ENCODE measurements at regions of chr19 and their contacts with region 1.

Region 1: GRCh38 chr19:4267101-4267900 is 11.8 kb upstream of the SHD start:
- DNase-seq: peak; percentile 83
- ATAC-seq: peak; percentile 81
- H3K4me3 Mint-ChIP-seq: no peak overlapping the region
- H3K27ac Mint-ChIP-seq: peak overlapping the region; percentile 9
- H3K4me1 Mint-ChIP-seq: peaks cover 14% of the 10 kb centered on the region
- H3K27me3 Mint-ChIP-seq: no peaks in the 10 kb centered on the region

Region 2: GRCh38 chr19:4206818-4207484 is 60.4 kb before region 1 on chr19:
- CTCF ChIA-PET with region 1: no interaction called
- POLR2A ChIA-PET with region 1: no interaction called
- intact Hi-C with region 1: no loop called
- DNase-seq: no peak
- ATAC-seq: no peak
- H3K4me3 Mint-ChIP-seq: no peak overlapping the region
- H3K27ac Mint-ChIP-seq: no peak overlapping the region
- H3K4me1 Mint-ChIP-seq: no peaks in the 10 kb centered on the region
- H3K27me3 Mint-ChIP-seq: peaks cover 5% of the 10 kb centered on the region

Region 3: GRCh38 chr19:4217429-4218264 is 49.7 kb before region 1 on chr19:
- CTCF ChIA-PET with region 1: no interaction called
- POLR2A ChIA-PET with region 1: no interaction called
- intact Hi-C with region 1: no loop called
- DNase-seq: no peak
- ATAC-seq: no peak
- H3K4me3 Mint-ChIP-seq: no peak overlapping the region
- H3K27ac Mint-ChIP-seq: no peak overlapping the region
- H3K4me1 Mint-ChIP-seq: peaks cover 2% of the 10 kb centered on the region
- H3K27me3 Mint-ChIP-seq: no peaks in the 10 kb centered on the region

Region 4: GRCh38 chr19:4256563-4256962 is 10.7 kb before region 1 on chr19:
- CTCF ChIA-PET with region 1: interaction called, 11 read pairs
- POLR2A ChIA-PET with region 1: no interaction called
- intact Hi-C with region 1: no loop called
- DNase-seq: peak; percentile 37
- ATAC-seq: no peak
- H3K4me3 Mint-ChIP-seq: no peak overlapping the region
- H3K27ac Mint-ChIP-seq: no peak overlapping the region
- H3K4me1 Mint-ChIP-seq: no peaks in the 10 kb centered on the region
- H3K27me3 Mint-ChIP-seq: no peaks in the 10 kb centered on the region

Region 5: DNA sequence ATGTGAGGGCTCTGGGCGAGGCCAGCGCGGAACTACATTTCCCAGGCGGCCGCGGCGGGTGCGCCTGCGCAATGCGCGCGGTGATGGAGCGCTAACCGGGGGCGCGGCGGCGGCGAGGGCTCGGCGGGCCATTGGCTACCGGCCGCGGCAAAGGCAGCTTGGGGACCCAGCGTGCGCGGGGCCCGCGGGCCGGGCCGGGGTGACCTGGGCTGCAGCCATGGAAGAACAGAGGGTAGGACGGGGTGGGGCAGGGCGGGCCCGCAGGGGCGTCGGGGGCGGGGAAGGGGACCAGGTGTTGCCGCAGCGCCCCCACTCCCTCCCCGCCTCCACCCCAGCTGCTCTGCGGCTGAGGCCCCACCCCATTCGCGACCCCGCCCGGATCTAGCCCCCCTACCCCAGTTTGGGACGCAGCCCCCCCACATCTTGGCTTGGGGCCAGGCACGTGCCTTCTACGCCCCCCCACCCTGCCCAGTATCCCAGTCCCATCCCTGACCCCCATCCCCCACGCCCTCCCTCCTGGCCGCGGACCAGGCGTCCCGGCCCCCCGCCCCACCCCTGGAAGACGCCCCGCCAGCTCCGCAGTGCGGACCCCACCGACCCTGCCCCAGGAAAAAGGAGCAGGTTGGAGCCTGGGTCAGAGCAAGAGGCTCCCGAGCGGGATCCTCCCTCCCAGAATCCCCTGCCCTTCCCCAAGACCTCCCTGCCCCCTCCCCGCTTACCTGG is 37.4 kb after region 1 on chr19 and contains the start of gene FSD1:
- CTCF ChIA-PET with region 1: interaction called, 4 read pairs
- POLR2A ChIA-PET with region 1: no interaction called
- intact Hi-C with region 1: loop called in 1 of 2 experiments (anchors 5 kb)
- DNase-seq: peak; percentile 90
- ATAC-seq: peak; percentile 82
- H3K4me3 Mint-ChIP-seq: peak within 1 kb of the TSS; percentile 66
- H3K27ac Mint-ChIP-seq: peak within 1 kb of the TSS; percentile 72
- H3K4me1 Mint-ChIP-seq: peaks cover 34% of the 10 kb centered on the region
- H3K27me3 Mint-ChIP-seq: no peaks in the 10 kb centered on the region
- total RNA-seq, gene FSD1: 23.1 to 25.3 TPM

Region 6: DNA sequence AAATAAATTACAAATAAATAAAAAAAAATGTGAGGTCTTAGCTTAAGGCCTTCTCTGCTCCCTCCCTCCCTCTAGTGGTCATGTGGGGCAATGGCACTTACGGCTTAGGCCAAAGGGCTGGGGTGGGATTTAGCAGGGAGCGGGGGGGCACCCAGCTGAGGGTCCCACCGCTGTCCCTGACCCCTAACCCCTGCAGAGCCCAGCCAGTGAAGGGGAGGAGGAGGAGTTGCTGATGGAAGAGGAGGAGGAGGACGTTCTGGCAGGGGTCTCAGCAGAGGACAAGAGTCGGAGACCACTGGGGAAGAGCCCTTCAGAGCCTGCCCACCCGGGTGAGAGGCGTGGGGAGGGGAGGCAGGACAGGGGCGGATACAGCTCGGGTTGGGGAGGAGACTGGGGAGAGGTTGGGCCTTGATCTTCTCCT is 85.4 kb after region 1 on chr19:
- CTCF ChIA-PET with region 1: interaction called, 52 read pairs
- POLR2A ChIA-PET with region 1: interaction called, 13 read pairs
- intact Hi-C with region 1: loop called (anchors 1 kb)
- DNase-seq: peak; percentile 74
- ATAC-seq: peak; percentile 72
- H3K4me3 Mint-ChIP-seq: no peak overlapping the region
- H3K27ac Mint-ChIP-seq: no peak overlapping the region
- H3K4me1 Mint-ChIP-seq: no peaks in the 10 kb centered on the region
- H3K27me3 Mint-ChIP-seq: no peaks in the 10 kb centered on the region

Region 7: DNA sequence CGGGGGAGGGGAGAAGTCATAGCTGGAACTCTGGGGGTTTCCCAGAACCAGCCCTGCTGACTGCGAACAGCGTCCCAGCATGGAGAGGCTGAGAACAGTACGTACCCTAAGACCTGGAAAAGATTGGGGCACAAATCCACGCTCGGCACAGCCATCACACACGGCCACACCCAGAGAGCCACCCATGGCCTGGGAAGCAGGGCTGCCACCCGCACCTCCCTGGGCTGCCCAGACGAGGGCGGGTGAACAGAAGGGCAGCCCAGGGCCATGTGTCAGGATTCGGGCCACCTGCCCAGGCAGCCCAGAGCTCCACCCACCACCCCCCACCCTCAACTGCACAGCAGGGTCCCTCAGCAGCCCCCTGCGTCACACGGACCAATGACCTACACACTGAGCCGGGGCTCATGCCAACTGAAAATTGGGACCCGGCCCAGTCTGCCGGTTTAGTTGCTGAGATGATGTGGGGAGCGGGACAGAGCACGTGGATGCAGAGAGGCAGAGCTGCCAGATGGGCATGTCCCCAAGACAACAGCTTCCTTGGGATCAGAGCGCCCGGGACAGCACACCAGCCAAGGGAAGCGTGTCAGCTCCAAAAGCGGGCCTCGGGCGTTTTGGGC is 181.8 kb after region 1 on chr19:
- CTCF ChIA-PET with region 1: no interaction called
- POLR2A ChIA-PET with region 1: no interaction called
- intact Hi-C with region 1: no loop called
- DNase-seq: no peak
- ATAC-seq: no peak
- H3K4me3 Mint-ChIP-seq: no peak overlapping the region
- H3K27ac Mint-ChIP-seq: no peak overlapping the region
- H3K4me1 Mint-ChIP-seq: no peaks in the 10 kb centered on the region
- H3K27me3 Mint-ChIP-seq: no peaks in the 10 kb centered on the region

Region 8: DNA sequence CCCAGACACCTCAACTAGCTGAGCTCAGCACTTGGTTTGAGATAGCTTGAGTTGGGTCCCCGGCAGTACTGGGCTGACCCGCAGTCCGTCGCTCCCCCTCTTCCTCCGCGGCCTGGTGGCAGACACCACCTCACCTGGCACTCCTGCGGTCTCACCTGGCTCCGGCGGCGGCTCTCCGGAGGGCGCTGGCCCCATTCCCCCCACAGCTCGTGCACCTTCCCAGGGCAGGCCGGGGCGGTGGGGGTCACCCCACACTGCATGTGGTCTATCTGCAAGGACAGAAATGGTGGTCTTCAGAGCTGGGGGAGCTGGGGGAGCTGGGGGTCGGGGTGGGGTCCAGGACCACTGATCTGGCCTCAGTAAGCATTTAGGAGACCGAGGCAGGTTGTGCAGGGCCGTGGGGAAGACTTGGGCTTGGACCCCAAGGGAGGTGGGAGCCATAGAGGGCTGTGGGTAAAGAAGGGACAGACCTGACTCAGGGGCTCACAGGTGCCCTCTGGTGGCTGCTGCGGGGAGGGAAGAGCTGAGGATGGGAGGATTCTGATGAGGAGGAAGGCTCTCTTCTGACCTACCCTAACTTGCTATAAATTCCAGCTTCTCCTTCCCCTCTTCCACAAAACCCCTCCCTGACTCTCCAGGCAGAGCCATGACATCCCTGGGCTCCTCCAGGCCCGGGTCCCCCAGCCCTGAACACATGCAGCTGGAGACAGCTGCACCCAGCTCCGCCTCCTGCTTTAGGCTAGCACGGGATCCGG is 257.7 kb after region 1 on chr19:
- CTCF ChIA-PET with region 1: interaction called, 3 read pairs
- POLR2A ChIA-PET with region 1: no interaction called
- intact Hi-C with region 1: loop called in 1 of 2 experiments (anchors 1 kb)
- DNase-seq: peak; percentile 86
- ATAC-seq: peak; percentile 93
- H3K4me3 Mint-ChIP-seq: no peak overlapping the region
- H3K27ac Mint-ChIP-seq: no peak overlapping the region
- H3K4me1 Mint-ChIP-seq: no peaks in the 10 kb centered on the region
- H3K27me3 Mint-ChIP-seq: peaks cover 2% of the 10 kb centered on the region

Region 9: GRCh38 chr19:4589579-4590410 is 322.5 kb after region 1 on chr19:
- CTCF ChIA-PET with region 1: no interaction called
- POLR2A ChIA-PET with region 1: no interaction called
- intact Hi-C with region 1: no loop called
- DNase-seq: peak; percentile 52
- ATAC-seq: peak; percentile 47
- H3K4me3 Mint-ChIP-seq: no peak overlapping the region
- H3K27ac Mint-ChIP-seq: no peak overlapping the region
- H3K4me1 Mint-ChIP-seq: no peaks in the 10 kb centered on the region
- H3K27me3 Mint-ChIP-seq: peaks cover 44% of the 10 kb centered on the region

Measured in activated CD4-positive, alpha-beta T cell treated with anti-CD3 and anti-CD28 coated beads for 36 hours (primary cell).